ENCODE measurements at regions of chr9 and their contacts with region 1.

Region 1: GRCh38 chr9:68974431-68974830 is 39.5 kb downstream of the PRKACG start:
- DNase-seq: peak; percentile 58
- ATAC-seq: peak; percentile 95
- H3K4me3 Mint-ChIP-seq: peak overlapping the region; percentile 8
- H3K27ac Mint-ChIP-seq: peak overlapping the region; percentile 77
- H3K4me1 Mint-ChIP-seq: peaks cover 48% of the 10 kb centered on the region
- H3K27me3 Mint-ChIP-seq: peaks cover 3% of the 10 kb centered on the region

Region 2: DNA sequence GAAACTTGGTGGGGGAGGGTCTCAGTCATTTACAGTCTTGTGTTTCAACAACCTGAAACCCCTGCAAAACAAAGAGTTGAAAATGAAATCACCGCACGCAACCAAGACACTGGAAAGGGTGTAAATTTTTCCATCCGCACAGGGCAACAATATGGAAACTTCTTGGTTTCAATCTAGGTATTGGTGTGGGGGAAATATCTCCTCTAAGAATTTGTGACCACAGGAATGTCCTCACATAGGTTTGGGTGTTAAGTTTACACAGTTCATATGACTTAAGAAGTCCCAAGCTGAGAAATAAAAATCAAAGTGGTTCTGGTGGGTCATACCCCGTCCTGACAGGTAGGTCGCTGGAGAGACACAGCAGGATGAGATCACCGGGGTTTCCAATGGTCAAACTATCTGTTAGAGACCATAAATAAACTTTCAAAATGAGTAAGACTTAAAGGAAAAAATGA is 321.3 kb before region 1 on chr9:
- CTCF ChIA-PET with region 1: no interaction called
- POLR2A ChIA-PET with region 1: no interaction called
- intact Hi-C with region 1: loop called (anchors 1 kb)
- DNase-seq: peak; percentile 67
- ATAC-seq: peak; percentile 73
- H3K4me3 Mint-ChIP-seq: no peak overlapping the region
- H3K27ac Mint-ChIP-seq: peak overlapping the region; percentile 72
- H3K4me1 Mint-ChIP-seq: peaks cover 35% of the 10 kb centered on the region
- H3K27me3 Mint-ChIP-seq: peaks cover 22% of the 10 kb centered on the region

Region 3: GRCh38 chr9:68802525-68803015 is 171.9 kb before region 1 on chr9:
- CTCF ChIA-PET with region 1: no interaction called
- POLR2A ChIA-PET with region 1: no interaction called
- intact Hi-C with region 1: loop called in 1 of 2 experiments (anchors 1 kb)
- DNase-seq: peak; percentile 77
- ATAC-seq: peak; percentile 98
- H3K4me3 Mint-ChIP-seq: no peak overlapping the region
- H3K27ac Mint-ChIP-seq: no peak overlapping the region
- H3K4me1 Mint-ChIP-seq: peaks cover 3% of the 10 kb centered on the region
- H3K27me3 Mint-ChIP-seq: peaks cover 2% of the 10 kb centered on the region

Region 4: GRCh38 chr9:68949271-68950000 is 25.0 kb before region 1 on chr9:
- CTCF ChIA-PET with region 1: interaction called, 6 read pairs
- POLR2A ChIA-PET with region 1: interaction called, 3 read pairs
- intact Hi-C with region 1: loop called (anchors 1 kb)
- DNase-seq: peak; percentile 55
- ATAC-seq: no peak
- H3K4me3 Mint-ChIP-seq: no peak overlapping the region
- H3K27ac Mint-ChIP-seq: peak overlapping the region; percentile 48
- H3K4me1 Mint-ChIP-seq: peaks cover 42% of the 10 kb centered on the region
- H3K27me3 Mint-ChIP-seq: peaks cover 13% of the 10 kb centered on the region

Region 5: DNA sequence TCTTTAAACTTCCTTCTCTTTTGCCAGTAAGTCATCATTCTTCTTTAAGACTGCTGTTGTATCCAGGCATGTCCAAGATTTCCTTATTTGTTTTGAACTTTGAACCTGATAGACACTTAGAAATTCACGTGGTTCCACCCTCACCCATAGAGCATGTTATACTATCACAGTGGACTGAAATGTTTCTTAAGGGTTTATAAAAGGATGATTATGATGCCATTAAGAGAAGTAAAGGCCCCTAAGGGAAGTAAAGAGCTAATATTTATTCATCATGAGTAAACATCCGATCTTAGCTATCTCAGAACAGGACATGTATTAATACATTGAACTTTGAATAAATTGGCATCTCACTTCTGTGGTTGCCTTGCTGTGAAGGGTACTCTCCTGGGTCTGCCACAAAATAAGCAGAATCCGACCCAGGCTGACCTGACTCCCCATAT is 10.3 kb before region 1 on chr9:
- CTCF ChIA-PET with region 1: interaction called, 15 read pairs
- POLR2A ChIA-PET with region 1: no interaction called
- intact Hi-C with region 1: no loop called
- DNase-seq: no peak
- ATAC-seq: no peak
- H3K4me3 Mint-ChIP-seq: no peak overlapping the region
- H3K27ac Mint-ChIP-seq: no peak overlapping the region
- H3K4me1 Mint-ChIP-seq: no peaks in the 10 kb centered on the region
- H3K27me3 Mint-ChIP-seq: peaks cover 14% of the 10 kb centered on the region

Region 6: DNA sequence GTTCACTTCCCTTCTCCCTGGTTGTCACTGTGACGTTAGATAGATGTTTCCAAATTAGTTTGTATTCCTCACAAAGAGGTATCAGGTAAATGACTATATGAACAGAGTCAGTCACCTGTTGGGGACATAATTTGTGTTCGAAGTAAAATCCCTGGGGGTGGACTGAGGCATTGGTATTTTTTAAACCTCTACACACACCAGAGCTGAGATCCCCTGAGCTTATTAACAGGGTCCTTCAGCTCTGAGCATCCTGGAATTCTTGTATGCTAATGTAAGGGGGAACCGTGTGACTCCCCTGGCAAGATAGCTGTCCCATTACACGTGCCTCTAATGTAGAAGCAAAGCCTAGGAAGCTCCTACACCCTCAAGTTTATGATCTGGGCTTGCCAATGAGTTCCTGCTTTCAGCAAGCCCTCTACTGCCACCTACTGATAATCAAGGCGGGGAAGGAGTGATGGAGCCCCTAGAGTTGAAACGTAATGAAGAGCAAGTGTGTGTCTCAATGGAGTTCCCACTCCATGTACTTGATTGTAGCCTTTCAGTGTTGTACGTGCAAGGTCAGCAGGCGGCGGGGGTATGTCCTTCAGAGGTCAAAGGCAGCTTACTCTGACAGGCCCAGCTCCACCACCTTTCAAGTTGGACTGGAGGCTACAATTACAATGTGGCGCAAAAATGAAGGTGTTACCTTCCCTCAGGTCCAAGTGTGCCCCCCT is 25.1 kb after region 1 on chr9:
- CTCF ChIA-PET with region 1: interaction called, 54 read pairs
- POLR2A ChIA-PET with region 1: interaction called, 3 read pairs
- intact Hi-C with region 1: loop called in 1 of 2 experiments (anchors 1 kb)
- DNase-seq: peak; percentile 75
- ATAC-seq: peak; percentile 90
- H3K4me3 Mint-ChIP-seq: no peak overlapping the region
- H3K27ac Mint-ChIP-seq: peak overlapping the region; percentile 63
- H3K4me1 Mint-ChIP-seq: peaks cover 24% of the 10 kb centered on the region
- H3K27me3 Mint-ChIP-seq: peaks cover 2% of the 10 kb centered on the region

Region 7: DNA sequence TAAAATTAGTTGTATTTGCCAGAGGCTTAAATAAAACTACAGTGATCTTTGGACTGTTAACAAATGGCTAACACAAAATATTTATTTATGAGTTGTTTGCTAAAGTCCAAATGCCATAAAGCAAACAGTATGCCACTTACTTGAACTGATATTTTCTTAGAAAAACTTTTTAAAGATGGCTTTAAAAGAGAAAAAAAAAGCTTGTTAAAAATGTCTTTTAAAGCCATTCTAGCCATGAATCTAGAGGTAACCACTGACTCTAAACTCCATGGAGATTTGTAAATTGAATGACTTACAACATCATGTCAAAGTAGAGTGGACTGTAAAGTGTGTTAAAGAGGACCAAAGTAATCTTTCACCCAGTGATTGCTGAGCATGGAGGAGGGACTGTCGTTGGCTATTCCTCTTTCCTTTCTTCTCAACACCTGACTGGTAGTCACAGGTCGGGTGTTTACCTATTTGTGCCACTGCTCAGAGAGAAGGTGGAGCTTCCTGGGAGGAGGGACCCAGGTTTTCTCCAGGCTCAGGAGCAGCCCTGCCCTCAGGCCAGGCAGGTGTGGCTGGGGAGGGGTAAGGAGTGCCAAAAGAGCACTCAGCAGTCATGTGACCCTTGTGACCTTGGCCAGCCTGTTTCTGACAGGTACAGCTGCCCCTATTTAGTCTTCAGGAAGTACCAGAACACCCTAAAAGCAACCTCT is 130.5 kb after region 1 on chr9:
- CTCF ChIA-PET with region 1: no interaction called
- POLR2A ChIA-PET with region 1: no interaction called
- intact Hi-C with region 1: no loop called
- DNase-seq: no peak
- ATAC-seq: no peak
- H3K4me3 Mint-ChIP-seq: no peak overlapping the region
- H3K27ac Mint-ChIP-seq: no peak overlapping the region
- H3K4me1 Mint-ChIP-seq: no peaks in the 10 kb centered on the region
- H3K27me3 Mint-ChIP-seq: no peaks in the 10 kb centered on the region

Region 8: DNA sequence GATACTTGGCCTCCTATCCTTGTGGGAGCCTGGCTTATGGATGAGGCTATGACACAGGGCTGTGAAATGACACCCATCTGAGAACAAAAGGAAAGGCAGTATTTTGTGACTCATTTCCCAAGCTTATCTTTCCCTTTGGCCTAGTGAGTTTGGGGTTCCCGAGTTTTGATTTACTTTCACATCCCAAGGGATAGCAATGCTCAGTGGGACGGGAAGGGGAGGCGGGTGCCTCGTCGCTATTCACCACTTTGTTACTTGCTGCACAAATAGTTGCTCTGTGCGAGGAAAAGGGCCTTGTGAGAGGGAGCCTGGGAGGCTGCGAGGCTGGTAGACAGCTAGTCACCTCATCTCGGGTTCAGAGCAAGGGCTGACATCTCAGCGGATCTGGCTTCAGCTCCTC is 291.5 kb after region 1 on chr9:
- CTCF ChIA-PET with region 1: no interaction called
- POLR2A ChIA-PET with region 1: no interaction called
- intact Hi-C with region 1: no loop called
- DNase-seq: no peak
- ATAC-seq: no peak
- H3K4me3 Mint-ChIP-seq: no peak overlapping the region
- H3K27ac Mint-ChIP-seq: no peak overlapping the region
- H3K4me1 Mint-ChIP-seq: no peaks in the 10 kb centered on the region
- H3K27me3 Mint-ChIP-seq: peaks cover 5% of the 10 kb centered on the region